Posterior cingulate gyrus (tissue), 11 donors: ENCODE measurements at regions of chr6 and their contacts with region 1.

Region 1: DNA sequence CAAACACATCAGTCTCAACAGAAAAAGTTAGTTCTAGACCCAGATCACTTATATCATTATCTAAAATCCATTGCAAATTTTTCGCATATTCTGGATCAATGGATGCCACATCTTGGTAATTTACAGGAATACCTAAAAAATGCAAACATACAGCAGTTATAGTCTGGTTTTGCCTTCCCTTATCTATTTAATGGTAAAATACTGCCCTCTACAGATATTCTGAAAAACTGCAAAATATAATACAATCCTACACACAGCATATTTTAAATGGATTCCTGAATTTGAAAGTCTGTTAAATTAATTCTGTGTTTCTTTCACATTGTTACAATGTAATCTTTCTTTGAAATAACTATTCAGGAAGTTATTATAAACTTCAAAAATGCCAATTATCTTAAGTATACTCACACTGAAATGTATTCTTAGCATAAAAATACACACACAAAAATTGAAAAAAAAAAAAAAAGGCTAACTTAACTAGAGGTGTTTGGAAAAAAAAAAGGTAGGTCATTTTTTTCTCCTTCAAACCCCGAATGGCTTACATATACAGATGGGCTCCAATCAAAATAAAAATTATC is 88.4 kb downstream of the HACE1 start:
- DNase-seq: no peak

Region 2: DNA sequence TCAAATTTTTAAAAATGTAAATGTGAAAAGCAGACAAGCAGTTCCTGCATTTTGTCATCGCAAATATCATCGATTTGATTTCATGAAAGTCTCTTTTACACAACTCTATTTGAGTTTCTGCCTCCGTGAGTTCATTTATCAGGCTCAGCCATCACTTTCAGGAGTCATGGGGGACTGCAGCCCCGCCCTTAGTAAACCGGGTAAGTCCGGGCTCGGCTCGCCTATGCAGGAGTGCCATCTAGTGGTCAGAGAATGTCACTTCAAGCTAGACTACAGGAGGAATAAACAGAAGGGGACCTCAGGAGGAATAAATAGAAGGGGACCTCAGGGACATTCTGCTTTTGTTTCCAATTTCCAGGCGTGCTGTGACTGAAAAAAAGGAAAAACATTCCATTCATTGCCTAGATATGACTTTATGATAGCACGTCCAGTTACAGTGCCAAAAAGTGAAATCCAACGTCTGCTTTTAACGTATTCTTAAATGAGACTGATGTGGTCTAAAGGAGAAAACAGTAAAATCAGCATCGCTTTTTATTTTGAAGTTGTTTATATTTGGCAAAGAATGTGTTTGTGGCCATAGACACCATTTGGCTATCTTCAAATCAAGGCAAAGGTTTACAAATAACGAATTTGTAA is 245.6 kb before region 1 on chr6:
- intact Hi-C with region 1: loop called (anchors 5 kb)
- DNase-seq: peak; percentile 61 to 97 (median 80)

Region 3: DNA sequence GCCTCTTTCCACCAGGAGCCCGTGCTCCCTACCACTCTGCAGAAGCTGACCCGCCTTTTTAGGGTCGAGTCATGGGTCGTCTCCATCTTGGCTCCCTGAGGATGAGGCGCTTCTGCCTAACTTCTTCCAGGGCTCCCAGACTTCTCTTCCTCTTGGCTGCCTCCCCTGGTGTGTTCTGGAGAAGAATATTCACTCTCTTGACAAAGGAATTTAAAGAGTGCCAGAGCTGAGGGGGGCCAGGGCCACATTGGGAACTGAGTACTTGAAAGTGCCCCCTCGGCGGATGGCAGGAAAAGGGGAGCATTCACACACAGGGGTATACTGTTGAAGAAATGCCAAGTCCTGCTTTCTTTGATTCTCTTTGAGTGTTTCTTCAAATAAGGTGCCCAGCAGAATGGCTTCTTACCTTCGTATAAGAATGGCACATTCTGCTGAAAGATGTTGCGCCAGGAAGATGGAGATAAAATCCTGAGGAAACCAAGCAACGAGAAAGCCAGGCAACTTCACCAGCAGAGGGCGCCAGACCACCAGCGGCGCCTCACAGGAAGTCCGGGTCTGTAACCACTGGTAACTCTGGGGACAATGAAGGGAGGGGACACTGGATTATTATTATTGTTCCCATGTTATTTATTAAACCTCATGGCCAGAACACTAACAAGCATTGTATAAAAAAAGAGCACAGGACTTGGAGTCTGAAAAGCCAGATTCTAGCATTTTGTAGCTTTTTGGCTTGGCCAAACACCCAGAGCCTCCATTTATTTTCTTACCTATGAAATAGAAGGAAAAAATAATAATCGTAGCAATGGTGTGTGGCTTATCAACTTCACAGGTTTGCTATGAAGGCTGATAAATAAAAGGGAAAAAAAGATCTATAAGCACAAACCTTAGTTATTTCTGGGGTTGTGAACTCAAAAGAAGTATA is 88.4 kb before region 1 on chr6:
- intact Hi-C with region 1: loop called (anchors 5 kb)
- DNase-seq: peak in 5 of 10 donors; percentile 12 to 83 (median 67)